ENCODE measurements at regions of chr1 and their contacts with region 1.

Region 1: DNA sequence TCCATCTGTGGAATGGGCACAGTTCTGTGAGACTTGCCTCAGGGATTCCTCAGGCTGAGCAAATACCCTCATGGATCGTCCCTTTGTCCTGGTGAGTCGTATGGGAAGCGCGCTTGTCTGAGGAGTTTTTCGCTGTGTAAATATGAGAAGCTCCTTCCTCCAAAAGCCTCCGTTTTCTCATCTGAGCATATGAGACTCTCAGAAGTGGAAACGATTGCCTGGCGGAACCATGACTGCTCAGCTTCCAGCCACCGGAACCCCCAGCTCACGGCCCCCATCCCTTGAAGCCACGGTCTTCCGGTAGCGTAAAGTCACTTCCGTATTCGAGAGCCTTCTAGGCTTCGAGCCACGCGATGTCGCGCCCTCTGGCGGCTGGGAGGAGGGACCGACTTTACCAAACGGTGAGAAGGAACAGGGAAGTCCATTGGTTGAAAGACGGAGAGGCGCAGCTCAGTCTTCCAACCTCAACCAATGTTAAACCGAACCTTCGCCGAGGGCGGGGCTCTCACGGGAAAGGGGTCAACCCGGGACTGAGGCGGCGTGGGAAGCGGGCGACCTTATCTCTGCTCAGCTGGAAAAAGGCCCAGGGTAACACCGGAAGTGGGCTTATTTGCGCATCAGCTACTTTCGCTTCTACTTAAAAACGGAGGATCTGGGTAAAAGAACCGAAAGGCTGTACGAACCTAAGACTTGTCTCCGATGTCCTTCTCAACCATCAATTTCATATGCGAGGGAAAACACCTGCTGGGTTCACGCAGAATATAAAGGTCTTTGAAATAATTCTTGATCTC is 46.2 kb downstream of the AZIN2 start:
- DNase-seq: peak; percentile 99
- H3K4me3 ChIP-seq: peak overlapping the region; percentile 70
- H3K27ac ChIP-seq: peak overlapping the region; percentile 83
- H3K27me3 ChIP-seq: no peaks in the 10 kb centered on the region
- CTCF ChIP-seq: peak; percentile 92

Region 2: GRCh38 chr1:32870615-32871363 is 256.4 kb before region 1 on chr1 and contains the start of gene FNDC5:
- CTCF ChIA-PET with region 1: no interaction called
- POLR2A ChIA-PET with region 1: no interaction called
- DNase-seq: no peak
- H3K4me3 ChIP-seq: peak within 1 kb of the TSS; percentile 46
- H3K27ac ChIP-seq: no peak within 1 kb of the TSS
- H3K27me3 ChIP-seq: peaks cover 12% of the 10 kb centered on the region
- CTCF ChIP-seq: no peak
- polyA plus RNA-seq, gene FNDC5: 1.5 and 1.9 TPM in 2 replicates

Region 3: GRCh38 chr1:33055210-33056008 is 71.8 kb before region 1 on chr1:
- CTCF ChIA-PET with region 1: no interaction called
- POLR2A ChIA-PET with region 1: no interaction called
- DNase-seq: peak; percentile 75
- H3K4me3 ChIP-seq: no peak overlapping the region
- H3K27ac ChIP-seq: no peak overlapping the region
- H3K27me3 ChIP-seq: no peaks in the 10 kb centered on the region
- CTCF ChIP-seq: peak; percentile 87

Region 4: DNA sequence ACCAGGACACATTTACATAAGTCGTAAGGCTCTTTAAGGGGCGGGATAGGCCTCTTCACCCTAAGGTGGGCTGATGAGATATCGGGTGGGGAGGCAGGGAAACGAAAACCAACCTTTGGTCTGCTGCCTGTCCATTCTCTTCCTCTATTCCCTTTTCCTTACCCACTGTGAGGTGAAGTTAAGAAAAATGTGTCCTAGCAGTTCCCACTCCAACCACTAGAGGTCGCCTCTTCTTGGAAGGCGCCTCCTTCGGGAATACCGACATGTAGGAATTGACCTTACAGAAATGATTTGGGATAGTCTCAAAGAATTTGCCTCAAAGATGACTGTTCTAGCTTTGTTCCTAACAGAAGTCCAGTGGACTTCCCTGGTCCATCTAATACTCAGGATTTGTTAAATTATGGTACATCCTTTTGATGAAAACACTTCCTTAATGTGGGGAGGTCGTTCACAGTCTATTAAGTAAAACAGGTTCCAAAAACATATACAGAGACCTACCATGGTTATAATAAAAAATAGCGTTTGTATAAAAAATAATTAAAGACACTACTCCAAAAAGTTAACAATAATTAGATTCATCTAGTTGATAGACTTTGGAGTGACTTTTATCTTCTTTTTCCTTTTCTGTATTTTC is 32.1 kb before region 1 on chr1:
- CTCF ChIA-PET with region 1: interaction called, 22 read pairs
- POLR2A ChIA-PET with region 1: interaction called, 12 read pairs
- DNase-seq: peak; percentile 29
- H3K4me3 ChIP-seq: no peak overlapping the region
- H3K27ac ChIP-seq: no peak overlapping the region
- H3K27me3 ChIP-seq: no peaks in the 10 kb centered on the region
- CTCF ChIP-seq: peak; percentile 99

Region 5: GRCh38 chr1:33137800-33138199 is 10.6 kb after region 1 on chr1:
- CTCF ChIA-PET with region 1: interaction called, 43 read pairs
- POLR2A ChIA-PET with region 1: interaction called, 3 read pairs
- DNase-seq: no peak
- H3K4me3 ChIP-seq: no peak overlapping the region
- H3K27ac ChIP-seq: no peak overlapping the region
- H3K27me3 ChIP-seq: no peaks in the 10 kb centered on the region
- CTCF ChIP-seq: peak; percentile 59

Region 6: GRCh38 chr1:33170386-33171274 is 43.4 kb after region 1 on chr1:
- CTCF ChIA-PET with region 1: interaction called, 11 read pairs
- POLR2A ChIA-PET with region 1: interaction called, 9 read pairs
- DNase-seq: no peak
- H3K4me3 ChIP-seq: no peak overlapping the region
- H3K27ac ChIP-seq: peak overlapping the region; percentile 3
- H3K27me3 ChIP-seq: no peaks in the 10 kb centered on the region
- CTCF ChIP-seq: no peak